ENCODE measurements at regions of chr4 and their contacts with region 1.

Region 1: DNA sequence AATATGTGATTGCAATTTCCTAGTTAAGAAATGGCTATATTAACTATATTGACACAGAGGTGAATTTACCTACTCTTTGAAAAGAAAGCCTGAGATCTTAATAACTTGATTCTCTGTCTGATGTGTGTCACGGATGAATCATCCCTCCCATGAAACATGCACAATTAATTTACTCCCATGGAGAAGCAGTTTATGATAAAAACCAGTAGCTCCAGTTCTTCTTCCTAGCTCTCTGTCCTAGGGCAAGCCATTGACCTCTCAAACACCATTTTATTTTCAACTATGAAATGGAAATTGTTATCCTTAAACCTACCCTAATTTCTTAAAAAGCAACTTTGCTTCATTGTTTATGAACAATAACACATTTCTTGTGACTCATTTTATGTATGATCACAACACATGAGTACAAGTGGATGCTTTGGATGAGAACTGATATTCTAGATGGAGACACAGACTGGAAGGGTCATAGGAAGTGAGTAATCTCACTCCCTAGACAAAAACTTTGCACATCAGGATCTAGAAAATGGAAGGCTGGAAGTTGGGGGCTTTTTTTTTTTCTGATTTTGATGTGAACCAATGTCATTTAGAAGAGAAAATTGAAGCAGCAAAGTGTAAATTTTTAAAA is 438.4 kb downstream of the GPAT3 start:
- DNase-seq: no peak
- H3K4me3 ChIP-seq: no peak overlapping the region
- H3K27ac ChIP-seq: no peak overlapping the region
- H3K4me1 ChIP-seq: no peaks in the 10 kb centered on the region
- H3K27me3 ChIP-seq: no peaks in the 10 kb centered on the region
- CTCF ChIP-seq: no peak
- POLR2A ChIP-seq: no peak

Region 2: DNA sequence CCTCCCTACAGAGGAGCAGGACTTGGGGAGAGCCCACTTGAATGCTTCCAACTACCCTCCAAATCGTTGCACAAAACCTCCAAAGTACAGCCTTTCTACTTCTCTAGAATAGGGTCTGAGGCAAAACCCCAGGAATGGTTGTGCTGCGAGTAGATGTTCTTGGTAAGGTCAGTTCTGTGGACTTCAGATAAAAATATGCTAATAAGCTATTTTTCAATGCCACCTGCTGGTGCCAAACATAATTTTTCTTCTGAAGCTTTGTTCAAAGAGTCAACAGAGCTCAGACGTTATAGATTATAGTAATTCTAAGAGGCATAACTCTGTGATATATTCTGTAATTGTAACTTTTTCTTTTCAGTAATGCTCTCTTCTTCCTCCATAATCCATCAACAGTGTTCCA is 12.7 kb before region 1 on chr4:
- intact Hi-C with region 1: loop called (anchors 2 kb)
- DNase-seq: no peak
- H3K4me3 ChIP-seq: no peak overlapping the region
- H3K27ac ChIP-seq: no peak overlapping the region
- H3K4me1 ChIP-seq: no peaks in the 10 kb centered on the region
- H3K27me3 ChIP-seq: no peaks in the 10 kb centered on the region
- CTCF ChIP-seq: no peak
- POLR2A ChIP-seq: no peak

Region 3: DNA sequence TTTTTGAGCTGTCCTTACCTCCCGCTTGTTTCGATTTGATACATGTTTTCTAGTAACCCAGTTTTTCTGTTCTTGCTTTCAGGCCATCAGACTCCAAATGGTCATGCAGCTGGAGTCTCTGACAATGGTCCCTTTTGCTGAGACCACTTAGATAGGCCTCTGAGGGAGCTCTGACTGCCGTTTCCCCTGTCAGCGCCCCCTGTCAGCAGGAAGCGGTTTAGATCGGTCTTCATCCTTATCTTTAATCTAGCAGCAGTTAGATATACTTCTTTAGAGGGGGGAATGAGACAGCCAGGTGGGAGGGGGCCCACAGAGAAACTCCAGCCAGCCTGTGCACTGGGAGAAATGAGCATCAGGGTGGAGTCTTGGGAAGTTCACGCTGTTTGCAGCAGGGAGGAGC is 19.5 kb after region 1 on chr4:
- intact Hi-C with region 1: no loop called
- DNase-seq: no peak
- H3K4me3 ChIP-seq: no peak overlapping the region
- H3K27ac ChIP-seq: no peak overlapping the region
- H3K4me1 ChIP-seq: no peaks in the 10 kb centered on the region
- H3K27me3 ChIP-seq: no peaks in the 10 kb centered on the region
- CTCF ChIP-seq: no peak
- POLR2A ChIP-seq: no peak

Measured in breast epithelium (tissue), 4 donors.